PC-3 (cell line): ENCODE measurements at regions of chr7 and their contacts with region 1.

Region 1: GRCh38 chr7:124723012-124723411 is 42.6 kb downstream of the GPR37 start:
- DNase-seq: peak; percentile 88
- ATAC-seq: peak; percentile 63
- H3K4me3 ChIP-seq: peak overlapping the region; percentile 21; the same call in 1 of the 2 replicates
- H3K27ac ChIP-seq: peak overlapping the region; percentile 95
- H3K4me1 ChIP-seq: peaks cover 63% of the 10 kb centered on the region
- H3K27me3 ChIP-seq: no peaks in the 10 kb centered on the region
- CTCF ChIP-seq: no peak

Region 2: DNA sequence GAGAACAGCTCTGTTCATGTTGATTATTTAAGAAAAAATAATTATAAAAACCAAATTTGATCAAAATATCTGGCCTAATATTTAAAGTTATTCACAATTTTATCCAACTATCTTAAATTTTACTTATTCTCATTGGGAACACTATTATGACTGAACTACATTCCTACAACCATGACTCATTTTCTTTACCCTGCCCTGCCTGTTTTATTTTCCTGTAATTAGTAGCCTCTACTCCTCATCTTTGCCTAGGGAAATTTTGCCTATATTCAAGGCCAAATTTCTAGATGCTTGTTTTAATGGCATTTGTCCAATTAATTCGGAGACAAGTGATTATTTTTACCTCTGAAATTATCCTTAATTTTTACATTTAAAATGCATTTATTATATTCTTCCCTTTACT is 400.5 kb before region 1 on chr7:
- CTCF ChIA-PET with region 1: no interaction called
- POLR2A ChIA-PET with region 1: no interaction called
- intact Hi-C with region 1: loop called (anchors 1 kb)
- DNase-seq: peak; percentile 62
- ATAC-seq: peak; percentile 29; the same call in 1 of the 2 replicates
- H3K4me3 ChIP-seq: no peak overlapping the region
- H3K27ac ChIP-seq: no peak overlapping the region
- H3K4me1 ChIP-seq: peaks cover 47% of the 10 kb centered on the region
- H3K27me3 ChIP-seq: no peaks in the 10 kb centered on the region
- CTCF ChIP-seq: no peak

Region 3: DNA sequence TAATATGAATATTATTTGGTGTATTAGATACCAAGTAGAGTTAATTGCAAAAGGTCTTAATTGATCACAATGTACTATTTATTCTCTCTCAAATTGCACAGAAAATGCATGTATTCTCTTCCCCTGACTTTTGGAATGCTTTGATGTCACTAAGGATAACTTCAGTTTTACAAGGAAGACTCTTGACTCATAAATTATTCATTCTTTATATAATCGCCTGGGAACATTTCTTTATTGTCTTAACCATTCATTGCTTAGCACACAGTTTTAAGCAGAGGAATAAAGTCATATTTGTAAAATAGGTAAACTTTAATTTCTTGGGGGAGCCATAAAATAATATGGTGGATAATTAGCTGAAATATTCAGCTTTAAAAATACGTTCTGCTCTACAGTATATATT is 384.2 kb before region 1 on chr7:
- CTCF ChIA-PET with region 1: no interaction called
- POLR2A ChIA-PET with region 1: no interaction called
- intact Hi-C with region 1: loop called (anchors 5 kb)
- DNase-seq: peak; percentile 73
- ATAC-seq: peak; percentile 96
- H3K4me3 ChIP-seq: no peak overlapping the region
- H3K27ac ChIP-seq: peak overlapping the region; percentile 72
- H3K4me1 ChIP-seq: peaks cover 16% of the 10 kb centered on the region
- H3K27me3 ChIP-seq: no peaks in the 10 kb centered on the region
- CTCF ChIP-seq: no peak

Region 4: DNA sequence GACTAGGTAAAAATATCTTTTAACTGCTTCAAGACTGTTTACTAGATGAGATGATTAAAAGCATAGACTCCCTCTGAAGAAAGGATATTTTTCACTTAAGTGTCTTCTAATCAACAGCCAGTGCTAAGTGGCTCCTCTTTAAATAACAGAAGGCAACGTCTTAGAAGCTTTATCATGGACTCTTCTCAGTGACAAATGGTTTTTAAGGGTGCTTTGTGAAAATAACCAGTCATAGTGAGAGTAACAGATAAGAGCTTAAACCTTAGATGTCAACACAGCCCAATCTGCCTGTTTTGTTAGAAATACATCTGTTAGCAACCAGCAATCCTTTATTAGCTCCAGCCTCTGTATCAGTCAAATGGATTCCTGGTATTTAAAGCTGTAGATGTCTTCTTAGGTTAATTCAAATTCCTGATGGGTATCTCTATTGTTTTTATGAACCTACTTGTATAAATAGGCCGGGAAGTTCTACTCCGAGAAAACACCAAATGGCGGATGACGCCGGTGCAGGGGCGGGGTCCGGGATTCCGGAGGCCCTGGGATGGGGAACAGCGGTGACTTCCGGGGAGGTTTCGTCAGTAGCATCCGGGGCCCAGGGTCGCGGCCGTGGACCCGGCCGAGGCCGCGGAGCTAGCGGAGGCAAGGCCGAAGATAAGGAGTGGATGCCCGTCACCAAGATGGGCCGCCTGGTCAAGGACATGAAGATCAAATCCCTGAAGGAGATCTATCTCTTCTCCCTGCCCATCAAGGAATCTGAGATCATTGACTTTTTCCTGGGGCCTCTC is 242.8 kb before region 1 on chr7:
- CTCF ChIA-PET with region 1: no interaction called
- POLR2A ChIA-PET with region 1: no interaction called
- intact Hi-C with region 1: loop called (anchors 5 kb)
- DNase-seq: no peak
- ATAC-seq: no peak
- H3K4me3 ChIP-seq: no peak overlapping the region
- H3K27ac ChIP-seq: no peak overlapping the region
- H3K4me1 ChIP-seq: peaks cover 16% of the 10 kb centered on the region
- H3K27me3 ChIP-seq: no peaks in the 10 kb centered on the region
- CTCF ChIP-seq: no peak

Region 5: DNA sequence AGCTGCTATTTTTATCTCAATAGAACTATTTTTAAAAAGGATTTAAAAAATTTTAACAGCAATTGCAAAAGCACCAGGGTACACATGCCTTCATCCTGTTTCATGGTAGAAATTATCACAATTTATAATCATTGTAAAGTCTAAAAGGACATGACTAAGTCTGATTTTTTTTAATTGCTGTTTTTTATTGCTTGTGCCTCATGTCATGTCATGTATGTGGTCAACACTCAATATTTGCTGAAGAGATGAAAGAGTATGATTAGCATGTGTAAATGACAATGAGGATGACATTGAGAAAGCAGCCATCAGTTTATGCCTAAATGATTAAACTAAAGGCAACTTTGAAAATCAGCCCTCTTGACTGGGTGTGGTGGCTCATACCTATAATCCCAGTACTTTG is 32.2 kb before region 1 on chr7:
- CTCF ChIA-PET with region 1: interaction called, 10 read pairs
- POLR2A ChIA-PET with region 1: no interaction called
- intact Hi-C with region 1: loop called (anchors 1 kb)
- DNase-seq: peak; percentile 85
- ATAC-seq: peak; percentile 93
- H3K4me3 ChIP-seq: no peak overlapping the region
- H3K27ac ChIP-seq: peak overlapping the region; percentile 50
- H3K4me1 ChIP-seq: peaks cover 11% of the 10 kb centered on the region; the same call in 1 of the 2 replicates
- H3K27me3 ChIP-seq: no peaks in the 10 kb centered on the region
- CTCF ChIP-seq: no peak

Region 6: DNA sequence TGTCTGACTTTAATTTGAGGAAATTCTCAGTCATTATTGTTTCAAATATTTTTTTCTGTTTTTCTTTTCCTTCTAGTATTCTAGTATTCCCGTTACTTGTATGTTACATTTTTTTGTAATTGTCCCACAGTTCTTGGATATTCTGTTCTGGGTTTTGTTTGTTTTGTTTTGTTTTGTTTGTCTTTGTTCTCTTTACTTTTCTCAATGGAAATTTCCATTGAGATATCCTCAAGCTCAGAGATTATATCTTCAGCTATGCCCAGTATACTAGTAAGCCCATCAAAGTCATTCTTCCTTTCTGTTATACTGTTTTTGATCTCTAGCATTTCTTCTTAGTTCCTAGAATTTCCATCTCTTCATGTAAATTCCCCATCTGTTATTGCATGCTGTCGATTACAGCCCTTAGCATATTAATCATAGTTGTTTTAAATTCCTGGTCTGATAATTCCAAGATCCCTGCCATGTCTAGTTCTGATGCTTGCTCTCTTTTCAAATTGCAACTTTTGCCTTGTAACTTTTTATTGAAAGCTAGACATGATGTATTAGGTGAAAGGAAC is 14.8 kb after region 1 on chr7:
- CTCF ChIA-PET with region 1: no interaction called
- POLR2A ChIA-PET with region 1: no interaction called
- intact Hi-C with region 1: no loop called
- DNase-seq: no peak
- ATAC-seq: no peak
- H3K4me3 ChIP-seq: no peak overlapping the region
- H3K27ac ChIP-seq: no peak overlapping the region
- H3K4me1 ChIP-seq: no peaks in the 10 kb centered on the region
- H3K27me3 ChIP-seq: no peaks in the 10 kb centered on the region
- CTCF ChIP-seq: no peak

Region 7: DNA sequence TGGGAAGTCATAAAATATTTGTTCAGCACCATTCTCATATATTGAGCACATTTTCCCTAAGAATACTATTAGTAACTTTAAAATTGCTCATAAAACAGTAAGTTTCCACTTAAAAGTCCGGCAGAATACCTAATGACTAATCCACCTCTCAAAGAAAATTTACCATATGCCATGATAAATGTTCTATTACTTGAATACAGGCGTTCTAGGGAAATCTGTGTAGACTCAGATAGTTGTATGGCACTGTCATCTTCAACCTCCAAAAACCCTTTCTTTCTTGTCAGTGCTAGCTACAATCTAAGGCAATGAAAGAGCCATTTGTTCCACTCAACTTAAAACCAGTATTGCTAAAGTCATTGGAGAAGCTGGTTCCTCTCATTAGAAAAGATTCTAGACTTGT is 35.3 kb after region 1 on chr7:
- CTCF ChIA-PET with region 1: no interaction called
- POLR2A ChIA-PET with region 1: no interaction called
- intact Hi-C with region 1: loop called (anchors 1 kb)
- DNase-seq: peak; percentile 46
- ATAC-seq: peak; percentile 83
- H3K4me3 ChIP-seq: no peak overlapping the region
- H3K27ac ChIP-seq: peak overlapping the region; percentile 61
- H3K4me1 ChIP-seq: peaks cover 28% of the 10 kb centered on the region
- H3K27me3 ChIP-seq: no peaks in the 10 kb centered on the region
- CTCF ChIP-seq: no peak